HepG2 (cell line): ENCODE measurements at regions of chr11 and their contacts with region 1.

Region 1: GRCh38 chr11:33970984-33971466 is 79.1 kb upstream of the LMO2 start:
- DNase-seq: peak; percentile 46
- ATAC-seq: peak; percentile 97
- H3K4me3 ChIP-seq: no peak overlapping the region
- H3K27ac ChIP-seq: no peak overlapping the region
- H3K4me1 ChIP-seq: peaks cover 7% of the 10 kb centered on the region; the same call in 1 of the 2 replicates
- H3K27me3 ChIP-seq: peaks cover 2 to 10% of the 10 kb centered on the region in 2 experiments; a peak in 3 of 5 replicates
- CTCF ChIP-seq: peak; percentile 84
- EP300 ChIP-seq: no peak
- POLR2A ChIP-seq: no peak
- RAD21 ChIP-seq: peak; percentile 66

Region 2: GRCh38 chr11:33808228-33808828 is 162.7 kb before region 1 on chr11:
- CTCF ChIA-PET with region 1: no interaction called
- POLR2A ChIA-PET with region 1: no interaction called
- in situ Hi-C with region 1: no loop called
- intact Hi-C with region 1: loop called (anchors 1 kb)
- DNase-seq: peak; percentile 63
- ATAC-seq: peak; percentile 98
- H3K4me3 ChIP-seq: no peak overlapping the region
- H3K27ac ChIP-seq: no peak overlapping the region
- H3K4me1 ChIP-seq: no peaks in the 10 kb centered on the region
- H3K27me3 ChIP-seq: peaks cover 2 to 15% of the 10 kb centered on the region in 2 experiments; a peak in 3 of 5 replicates
- CTCF ChIP-seq: peak; percentile 87
- EP300 ChIP-seq: no peak
- POLR2A ChIP-seq: no peak
- RAD21 ChIP-seq: peak; percentile 63; the same call in 1 of the 2 replicates

Region 3: DNA sequence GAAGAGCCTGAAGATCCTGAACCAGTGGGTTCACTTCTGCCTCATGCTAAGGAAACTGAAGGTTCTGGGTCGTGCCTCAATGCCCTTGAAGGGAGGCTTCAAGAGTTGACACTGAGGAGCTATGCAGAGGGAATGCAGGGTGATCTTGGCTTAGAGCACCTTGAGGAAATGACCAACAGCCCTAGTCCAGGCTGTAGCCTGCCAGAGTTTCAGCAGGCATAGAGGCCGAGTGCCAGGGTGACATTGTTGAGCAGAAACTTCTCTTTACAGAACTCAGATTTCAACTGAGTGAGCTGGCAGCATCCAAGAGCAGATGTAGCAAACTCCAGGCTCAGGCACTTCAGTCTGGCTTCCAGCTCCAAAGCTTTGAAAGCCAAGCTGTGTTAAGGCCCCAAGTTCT is 57.4 kb after region 1 on chr11:
- CTCF ChIA-PET with region 1: no interaction called
- POLR2A ChIA-PET with region 1: no interaction called
- in situ Hi-C with region 1: no loop called
- intact Hi-C with region 1: no loop called
- DNase-seq: no peak
- ATAC-seq: peak; percentile 82
- H3K4me3 ChIP-seq: peak overlapping the region; percentile 42 to 70 (median 60)
- H3K27ac ChIP-seq: peak overlapping the region; percentile 55
- H3K4me1 ChIP-seq: peaks cover 20% of the 10 kb centered on the region
- H3K27me3 ChIP-seq: no peaks in the 10 kb centered on the region
- CTCF ChIP-seq: no peak
- EP300 ChIP-seq: no peak
- POLR2A ChIP-seq: no peak
- RAD21 ChIP-seq: no peak